ENCODE measurements at regions of chr16 and their contacts with region 1.

Region 1: DNA sequence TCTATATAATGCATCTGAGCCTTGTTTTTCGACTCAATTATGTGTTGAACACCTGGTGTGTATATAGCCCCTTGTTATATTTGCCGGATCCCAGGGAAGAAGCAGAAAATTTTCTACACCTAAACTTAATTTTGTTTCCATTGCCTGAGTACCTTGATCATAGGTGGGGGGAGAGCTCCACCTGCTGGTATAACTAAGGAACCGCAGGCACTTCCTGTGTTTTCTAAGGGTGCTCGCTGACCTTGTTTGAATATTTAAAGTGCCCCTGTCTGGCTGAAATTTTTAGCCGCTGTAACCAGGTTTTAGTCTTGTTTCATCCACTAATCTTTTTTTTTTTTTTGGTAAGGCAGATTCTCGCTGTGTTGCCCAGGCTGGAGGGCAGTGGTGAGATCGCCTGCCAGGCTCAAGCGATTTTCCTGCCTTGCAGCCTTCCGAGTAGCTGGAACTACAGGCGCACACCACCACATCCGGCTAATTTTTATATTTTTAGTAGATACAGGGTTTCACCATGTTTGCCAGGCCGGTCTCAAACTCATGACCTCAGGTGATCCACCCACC is 6.5 kb upstream of the NUBP1 start:
- DNase-seq: peak; percentile 62 to 75
- H3K4me3 ChIP-seq: no peak overlapping the region
- H3K4me1 ChIP-seq: no peaks in the 10 kb centered on the region
- H3K27me3 ChIP-seq: no peaks in the 10 kb centered on the region

Region 2: DNA sequence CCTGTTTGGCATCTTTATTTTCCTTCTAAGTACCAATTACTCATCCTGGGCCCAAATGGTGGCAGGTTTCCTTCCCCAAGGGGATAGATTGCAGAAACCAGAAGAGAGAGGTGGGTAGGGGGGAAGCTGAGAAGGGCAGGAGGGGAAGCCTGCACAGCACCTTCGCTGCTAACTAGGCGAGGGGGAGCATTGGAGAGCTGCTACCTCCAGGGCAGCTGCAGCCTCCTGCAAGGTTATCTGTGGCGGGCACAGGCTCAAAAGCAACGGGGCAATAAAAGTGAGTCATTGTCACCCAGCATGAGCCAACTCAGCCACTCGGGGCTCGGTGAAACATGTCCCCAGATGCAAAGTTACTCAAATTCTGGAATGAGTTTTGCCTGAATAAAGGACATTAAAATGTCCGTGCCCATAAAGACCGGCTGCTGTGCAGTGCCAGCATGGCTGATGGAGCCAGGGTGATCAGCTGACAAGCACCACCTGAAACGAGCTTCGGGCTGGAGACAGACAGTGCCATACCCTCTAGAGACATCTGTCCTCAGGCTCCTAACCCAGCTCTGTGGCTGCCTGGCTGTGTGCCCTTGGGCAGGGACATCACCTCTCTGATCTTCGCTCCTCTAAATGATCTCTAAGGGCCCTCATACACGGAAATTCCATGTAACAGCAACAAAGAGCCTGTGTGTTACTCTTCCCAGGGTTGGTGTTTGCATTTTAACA is 486.9 kb before region 1 on chr16:
- in situ Hi-C with region 1: loop called (anchors 5 kb)
- DNase-seq: no peak
- H3K4me3 ChIP-seq: no peak overlapping the region
- H3K4me1 ChIP-seq: no peaks in the 10 kb centered on the region
- H3K27me3 ChIP-seq: no peaks in the 10 kb centered on the region

Measured in HAP-1 (cell line).